ENCODE measurements at regions of chr4 and their contacts with region 1.

Region 1: DNA sequence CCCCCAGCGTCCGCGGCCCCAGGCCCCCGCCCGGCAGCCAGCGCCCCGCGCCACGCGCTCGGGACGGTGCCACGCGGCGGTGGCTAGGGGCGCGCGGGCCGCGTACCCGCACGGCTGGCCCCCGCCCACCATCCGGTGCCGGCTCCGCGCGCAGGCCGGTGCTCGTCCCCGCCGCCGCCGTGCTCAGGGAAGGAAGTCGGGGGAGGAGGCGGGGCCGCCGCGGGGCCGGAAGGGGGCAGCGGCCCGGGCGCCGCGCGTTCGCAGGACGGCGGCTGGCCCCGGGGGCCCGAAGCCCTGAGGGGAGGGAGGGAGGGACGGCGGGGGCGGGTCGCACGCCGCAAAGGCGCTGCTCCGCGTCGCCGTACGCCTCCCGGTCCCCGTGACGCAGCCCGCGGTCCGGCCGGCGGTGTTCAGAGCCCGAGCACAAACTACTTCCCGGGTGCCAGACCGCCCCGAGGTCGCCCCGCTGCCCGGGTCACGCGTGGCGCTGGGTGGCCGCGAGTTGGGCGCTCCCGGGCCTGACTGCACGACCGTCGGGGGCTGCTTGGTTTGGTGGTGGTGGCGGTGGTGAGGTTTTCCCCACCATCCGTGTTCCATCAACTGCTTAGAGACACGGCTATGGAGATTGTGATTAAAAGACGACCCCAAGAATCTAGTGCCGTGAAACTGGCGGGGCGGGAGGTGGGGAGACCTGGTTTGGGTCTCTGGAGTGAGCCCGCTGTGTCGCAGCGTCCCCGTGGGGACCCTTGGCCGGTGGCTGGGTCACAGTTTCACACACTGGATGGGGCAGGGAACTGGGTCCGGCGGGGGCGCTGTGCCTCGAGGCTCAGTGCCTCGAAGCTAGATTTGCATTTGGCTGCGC is at the start of gene DCTD:
- DNase-seq: peak; percentile 86
- H3K4me3 ChIP-seq: peak within 1 kb of the TSS; percentile 71 to 92 (median 82)
- H3K27ac ChIP-seq: peak within 1 kb of the TSS; percentile 93 to 96 (median 94)
- H3K4me1 ChIP-seq: peaks cover 0 to 36% (median 14%) of the 10 kb centered on the region in 4 donors
- H3K27me3 ChIP-seq: no peaks in the 10 kb centered on the region
- CTCF ChIP-seq: peak in 1 of 4 experiments; percentile 8
- EP300 ChIP-seq: no peak
- POLR2A ChIP-seq: peak in 1 of 2 donors; percentile 13
- total RNA-seq, gene DCTD: 35.2 to 48.2 (median 40.9) TPM

Region 2: DNA sequence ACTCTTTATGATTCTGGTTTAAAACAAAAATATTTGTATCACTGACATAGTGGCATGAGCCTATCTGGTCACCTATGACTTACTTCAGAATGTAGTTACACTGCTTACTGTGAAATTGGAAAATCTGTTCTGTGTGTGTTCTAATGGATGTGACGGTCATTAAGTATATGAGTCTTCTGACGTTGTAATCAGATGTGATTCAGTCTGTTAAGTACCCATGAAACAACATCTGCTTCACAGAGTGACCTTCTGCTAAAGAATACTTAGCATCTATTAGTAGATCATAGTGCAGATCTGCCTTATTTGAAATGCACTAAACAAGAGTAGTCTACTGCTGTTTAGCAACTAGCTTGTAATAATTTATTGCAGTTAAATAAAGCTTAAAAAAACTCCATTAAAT is 317.3 kb before region 1 on chr4:
- intact Hi-C with region 1: no loop called
- DNase-seq: no peak
- H3K4me3 ChIP-seq: no peak overlapping the region
- H3K27ac ChIP-seq: no peak overlapping the region
- H3K4me1 ChIP-seq: peaks cover 0 to 6% (median 0%) of the 10 kb centered on the region in 4 donors
- H3K27me3 ChIP-seq: no peaks in the 10 kb centered on the region
- CTCF ChIP-seq: no peak
- EP300 ChIP-seq: no peak
- POLR2A ChIP-seq: no peak

Region 3: DNA sequence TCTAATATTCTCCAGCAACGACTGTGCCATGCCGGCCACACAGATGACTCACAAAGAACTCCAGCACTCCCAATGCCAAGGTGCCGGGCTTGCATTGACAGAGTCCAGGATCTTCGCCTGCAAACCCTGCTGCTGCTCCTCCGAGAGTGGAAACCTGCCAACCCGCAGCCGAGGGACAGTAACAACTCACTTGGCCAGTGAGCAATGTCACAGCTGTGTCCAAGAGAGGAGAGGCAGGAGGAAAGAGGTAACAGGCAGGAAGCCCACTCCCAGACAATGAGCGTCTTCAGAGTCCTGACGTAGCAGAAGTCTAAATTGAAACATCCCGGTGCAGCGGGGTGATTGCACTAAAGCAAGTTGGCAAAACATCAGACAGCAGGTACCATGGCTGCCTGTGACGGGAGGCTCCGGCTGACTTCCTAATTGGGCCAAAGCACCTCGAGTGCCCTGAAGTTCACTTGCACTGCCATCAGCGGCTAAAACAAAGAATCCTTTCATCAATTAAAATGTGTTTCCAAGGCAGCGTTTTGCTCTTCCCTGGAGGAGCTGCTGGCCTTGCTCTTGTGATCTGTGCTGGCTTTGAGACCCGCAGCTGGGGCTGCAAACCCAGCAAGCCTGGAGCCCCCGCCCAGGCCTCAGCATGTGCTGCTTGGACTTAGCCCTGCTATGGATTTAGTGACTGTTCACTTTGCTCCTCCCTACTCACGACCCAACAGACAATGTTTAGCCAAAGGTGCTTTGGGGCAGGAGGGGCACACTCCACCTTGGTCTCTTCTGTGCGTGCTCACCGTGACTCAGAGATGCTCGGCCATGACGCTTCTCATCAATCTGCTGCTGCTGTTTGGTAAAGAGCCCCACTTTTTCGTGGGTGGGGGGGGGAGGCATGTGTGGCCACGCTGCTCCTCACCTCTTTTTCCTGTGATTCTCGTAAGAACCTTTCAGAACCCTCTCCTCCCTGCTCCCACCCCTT is 36.7 kb before region 1 on chr4:
- intact Hi-C with region 1: loop called (anchors 5 kb)
- DNase-seq: peak; percentile 85
- H3K4me3 ChIP-seq: peak overlapping the region in 3 of 4 donors; percentile 27 to 36 (median 36)
- H3K27ac ChIP-seq: peak overlapping the region in 3 of 4 donors; percentile 35 to 64 (median 58)
- H3K4me1 ChIP-seq: peaks cover 0 to 34% (median 29%) of the 10 kb centered on the region in 4 donors
- H3K27me3 ChIP-seq: no peaks in the 10 kb centered on the region
- CTCF ChIP-seq: no peak
- EP300 ChIP-seq: no peak
- POLR2A ChIP-seq: no peak

Region 4: GRCh38 chr4:183249857-183250256 is 332.4 kb after region 1 on chr4:
- intact Hi-C with region 1: loop called (anchors 5 kb)
- DNase-seq: no peak
- H3K4me3 ChIP-seq: no peak overlapping the region
- H3K27ac ChIP-seq: no peak overlapping the region
- H3K4me1 ChIP-seq: peaks cover 0 to 20% (median 13%) of the 10 kb centered on the region in 4 donors
- H3K27me3 ChIP-seq: no peaks in the 10 kb centered on the region
- CTCF ChIP-seq: peak in 2 of 4 experiments; percentile 22 to 35
- EP300 ChIP-seq: no peak
- POLR2A ChIP-seq: no peak

Measured in sigmoid colon (tissue), 7 donors.